SK-N-SH (cell line): ENCODE measurements at regions of chr1 and their contacts with region 1.

Region 1: DNA sequence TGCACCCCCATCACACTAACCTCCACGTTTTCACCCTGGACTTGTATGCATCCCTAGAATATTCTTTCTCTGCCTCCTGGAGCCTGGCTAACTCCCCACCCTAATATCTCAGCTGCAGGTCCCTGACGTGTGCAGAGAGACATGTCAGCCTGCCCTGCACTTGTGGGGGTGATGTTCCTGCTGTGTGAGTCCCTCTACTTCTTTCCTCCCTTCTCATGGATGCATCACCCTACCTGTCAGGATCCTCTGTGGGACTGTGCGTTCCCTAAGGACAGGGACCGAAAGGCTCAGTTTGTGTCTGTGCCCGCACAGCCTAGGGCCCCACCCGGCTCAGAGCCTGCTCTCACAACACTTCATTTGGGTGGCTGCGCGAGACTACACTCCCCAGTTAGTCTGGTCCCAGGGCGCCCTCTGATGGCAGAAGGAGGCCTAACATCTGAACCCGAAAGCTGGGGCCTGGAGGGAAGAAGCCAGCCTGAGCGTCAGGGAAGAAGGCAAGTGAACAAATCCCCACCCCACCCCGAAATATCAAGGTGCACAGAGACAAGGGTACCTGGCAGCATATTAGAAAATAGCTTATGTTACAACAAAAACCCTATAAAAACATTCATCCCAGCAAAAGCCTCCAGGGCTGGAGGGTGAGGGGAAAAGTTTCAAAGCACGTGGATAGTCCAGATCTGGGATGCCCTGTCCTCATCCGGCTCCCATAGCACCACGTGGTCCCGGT is 3.7 kb downstream of the CD52 start:
- DNase-seq: peak; percentile 91
- H3K4me3 ChIP-seq: peak overlapping the region in 1 of 2 experiments; percentile 17; a peak in 1 of 4 replicates
- H3K27ac ChIP-seq: no peak overlapping the region
- H3K4me1 ChIP-seq: peaks cover 0 to 3% of the 10 kb centered on the region in 2 experiments; a peak in 1 of 4 replicates
- H3K27me3 ChIP-seq: no peaks in the 10 kb centered on the region
- CTCF ChIP-seq: peak; percentile 88
- EP300 ChIP-seq: no peak
- RAD21 ChIP-seq: peak; percentile 92

Region 2: GRCh38 chr1:26169669-26170471 is 151.6 kb before region 1 on chr1 and contains the start of gene ZNF593:
- CTCF ChIA-PET with region 1: interaction called, 17 read pairs
- POLR2A ChIA-PET with region 1: no interaction called
- DNase-seq: peak; percentile 99
- H3K4me3 ChIP-seq: peak within 1 kb of the TSS; percentile 85 to 98
- H3K27ac ChIP-seq: peak within 1 kb of the TSS; percentile 48 to 54; a peak in 3 of 4 replicates
- H3K4me1 ChIP-seq: peaks cover 0 to 18% of the 10 kb centered on the region in 2 experiments; a peak in 2 of 4 replicates
- H3K27me3 ChIP-seq: no peaks in the 10 kb centered on the region
- CTCF ChIP-seq: peak; percentile 78
- EP300 ChIP-seq: no peak
- RAD21 ChIP-seq: peak; percentile 47; the same call in 1 of the 2 replicates
- polyA plus RNA-seq, gene ZNF593: 58.7 and 64.8 TPM in 2 replicates

Region 3: DNA sequence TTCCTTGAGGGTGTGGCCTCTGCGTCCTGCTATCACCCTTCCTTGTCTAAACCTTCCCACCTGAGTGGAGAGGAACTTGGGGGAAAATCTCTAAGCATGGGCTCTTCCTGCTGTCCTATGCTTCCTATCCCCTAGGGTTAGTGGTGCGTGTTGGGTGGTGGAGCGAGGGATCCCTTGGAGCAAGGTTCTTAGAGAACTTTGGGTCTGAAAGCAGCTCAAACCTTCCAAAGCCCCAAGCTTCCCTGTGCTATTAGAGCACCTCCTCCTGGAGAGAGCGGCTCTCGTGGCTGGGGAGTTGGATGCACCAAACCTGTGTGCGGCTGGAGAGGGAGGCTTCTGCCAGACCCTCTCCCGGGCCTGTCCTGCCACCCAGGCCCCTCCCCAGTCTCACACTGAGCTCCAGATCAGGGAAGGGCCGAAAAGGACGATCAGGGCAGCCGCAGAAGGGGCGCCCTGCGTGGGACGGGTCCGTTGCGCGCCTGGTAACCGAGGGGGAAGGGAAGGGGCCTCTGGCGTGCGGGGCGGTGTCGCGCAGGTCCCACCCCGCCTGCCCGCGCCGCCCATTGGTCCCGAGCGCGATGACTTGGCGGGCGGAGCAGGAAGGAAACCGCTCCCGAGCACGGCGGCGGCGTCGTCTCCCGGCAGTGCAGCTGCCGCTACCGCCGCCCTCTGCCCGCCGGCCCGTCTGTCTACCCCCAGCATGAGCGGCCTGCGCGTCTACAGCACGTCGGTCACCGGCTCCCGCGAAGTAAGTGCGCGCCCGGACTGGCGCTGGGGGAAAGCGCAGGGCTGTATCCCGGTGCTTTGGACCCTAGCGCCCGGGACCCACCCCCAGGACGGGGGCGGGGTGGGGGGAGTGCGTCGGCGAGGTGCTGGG is 41.8 kb before region 1 on chr1 and contains the start of gene SH3BGRL3:
- CTCF ChIA-PET with region 1: interaction called, 213 read pairs
- POLR2A ChIA-PET with region 1: interaction called, 5 read pairs
- DNase-seq: peak; percentile 96
- H3K4me3 ChIP-seq: peak within 1 kb of the TSS; percentile 85 to 95
- H3K27ac ChIP-seq: peak within 1 kb of the TSS; percentile 76 to 87
- H3K4me1 ChIP-seq: peaks cover 36 to 71% of the 10 kb centered on the region in 2 experiments; a peak in 3 of 4 replicates
- H3K27me3 ChIP-seq: no peaks in the 10 kb centered on the region
- CTCF ChIP-seq: peak; percentile 62
- EP300 ChIP-seq: no peak
- RAD21 ChIP-seq: peak; percentile 19; the same call in 1 of the 2 replicates
- polyA plus RNA-seq, gene SH3BGRL3: 131 and 202 TPM in 2 replicates

Region 4: DNA sequence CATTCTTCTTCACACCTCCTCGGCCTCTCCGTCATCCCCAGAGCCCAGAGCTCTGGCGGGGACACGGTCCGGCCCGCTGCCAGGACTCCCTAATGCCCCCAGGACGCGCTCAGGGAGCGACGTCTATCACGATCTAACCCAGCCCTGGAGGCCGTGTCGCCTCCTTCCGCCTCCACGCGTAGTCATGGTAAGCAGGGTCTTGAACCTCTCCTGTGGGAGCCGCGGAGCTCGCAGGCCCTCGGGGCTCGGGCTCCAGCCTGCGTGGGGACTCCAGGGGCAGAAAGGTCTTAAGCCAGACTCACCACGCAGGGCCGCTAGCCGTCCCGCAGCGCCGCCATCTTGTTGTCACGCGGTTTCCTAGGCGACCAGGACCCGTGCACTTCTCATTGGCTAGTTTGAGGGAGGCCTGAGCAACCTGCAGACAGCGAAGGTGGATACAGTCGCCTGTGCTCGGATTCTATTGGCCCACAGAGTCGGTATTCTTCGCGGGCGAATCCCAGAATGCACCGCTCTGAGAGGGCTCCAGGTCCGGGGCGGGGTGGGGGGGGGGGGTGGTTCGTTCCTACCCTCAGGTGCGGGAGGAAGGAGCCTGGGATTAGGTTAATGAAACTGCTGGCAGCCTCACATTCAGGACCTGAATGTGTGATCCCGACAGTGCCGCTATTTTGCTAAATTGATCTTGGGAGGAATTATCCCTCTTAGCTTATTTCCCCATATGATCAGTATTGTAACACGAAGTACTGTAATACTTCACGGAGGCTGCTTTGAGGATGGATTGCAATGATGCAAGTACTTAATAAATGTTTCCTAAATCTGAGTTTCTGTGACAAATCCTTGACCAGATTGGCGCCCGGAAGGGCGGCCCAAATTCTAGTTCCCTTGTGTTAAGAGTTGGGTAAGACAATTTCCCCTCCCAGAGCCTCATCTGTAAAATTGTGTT is 14.9 kb before region 1 on chr1 and contains the start of gene UBXN11:
- CTCF ChIA-PET with region 1: interaction called, 41 read pairs
- POLR2A ChIA-PET with region 1: no interaction called
- DNase-seq: peak; percentile 96
- H3K4me3 ChIP-seq: peak within 1 kb of the TSS; percentile 81 to 92
- H3K27ac ChIP-seq: peak within 1 kb of the TSS; percentile 27 to 58; a peak in 3 of 4 replicates
- H3K4me1 ChIP-seq: peaks cover 0 to 9% of the 10 kb centered on the region in 2 experiments; a peak in 1 of 4 replicates
- H3K27me3 ChIP-seq: no peaks in the 10 kb centered on the region; the same call in 1 of the 2 replicates
- CTCF ChIP-seq: no peak
- EP300 ChIP-seq: no peak
- RAD21 ChIP-seq: no peak
- polyA plus RNA-seq, gene UBXN11: 30.6 and 35.3 TPM in 2 replicates

Region 5: DNA sequence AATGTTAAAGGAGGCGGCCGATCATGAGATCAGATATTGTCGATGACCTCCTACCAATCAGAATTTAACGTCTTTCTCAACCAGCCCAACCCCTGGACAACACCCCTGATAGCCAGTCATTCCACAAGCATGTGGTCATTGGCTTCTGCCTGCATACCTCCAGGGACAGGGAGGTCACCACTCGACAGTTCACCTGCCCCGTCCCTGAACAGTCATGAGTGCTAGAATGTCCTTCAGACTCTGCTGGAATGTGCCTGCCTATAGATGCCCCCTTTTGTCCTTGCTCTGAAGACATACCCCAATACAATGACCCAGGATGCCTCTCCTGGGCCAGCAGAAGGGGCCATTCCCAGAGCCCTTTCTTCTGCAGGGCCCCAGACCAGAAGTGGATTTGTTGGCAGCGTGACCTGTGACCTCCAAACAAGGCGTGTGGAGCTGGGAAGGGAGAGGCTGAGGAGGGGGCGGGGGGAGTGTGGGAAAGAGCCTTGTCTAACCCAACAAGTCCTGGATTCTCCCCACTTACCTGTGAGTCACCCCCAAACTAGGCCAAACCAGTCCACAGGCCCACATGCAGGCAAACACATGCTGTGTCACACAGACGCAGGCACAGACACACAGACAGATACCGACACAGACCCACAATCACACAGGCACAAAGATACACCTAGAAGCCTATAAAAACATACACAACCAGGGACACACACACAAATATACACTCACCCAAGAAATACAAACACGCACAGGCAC is 30.3 kb after region 1 on chr1:
- CTCF ChIA-PET with region 1: interaction called, 26 read pairs
- POLR2A ChIA-PET with region 1: no interaction called
- DNase-seq: no peak
- H3K4me3 ChIP-seq: no peak overlapping the region
- H3K27ac ChIP-seq: no peak overlapping the region
- H3K4me1 ChIP-seq: no peaks in the 10 kb centered on the region
- H3K27me3 ChIP-seq: no peaks in the 10 kb centered on the region
- CTCF ChIP-seq: no peak
- EP300 ChIP-seq: no peak
- RAD21 ChIP-seq: no peak

Region 6: DNA sequence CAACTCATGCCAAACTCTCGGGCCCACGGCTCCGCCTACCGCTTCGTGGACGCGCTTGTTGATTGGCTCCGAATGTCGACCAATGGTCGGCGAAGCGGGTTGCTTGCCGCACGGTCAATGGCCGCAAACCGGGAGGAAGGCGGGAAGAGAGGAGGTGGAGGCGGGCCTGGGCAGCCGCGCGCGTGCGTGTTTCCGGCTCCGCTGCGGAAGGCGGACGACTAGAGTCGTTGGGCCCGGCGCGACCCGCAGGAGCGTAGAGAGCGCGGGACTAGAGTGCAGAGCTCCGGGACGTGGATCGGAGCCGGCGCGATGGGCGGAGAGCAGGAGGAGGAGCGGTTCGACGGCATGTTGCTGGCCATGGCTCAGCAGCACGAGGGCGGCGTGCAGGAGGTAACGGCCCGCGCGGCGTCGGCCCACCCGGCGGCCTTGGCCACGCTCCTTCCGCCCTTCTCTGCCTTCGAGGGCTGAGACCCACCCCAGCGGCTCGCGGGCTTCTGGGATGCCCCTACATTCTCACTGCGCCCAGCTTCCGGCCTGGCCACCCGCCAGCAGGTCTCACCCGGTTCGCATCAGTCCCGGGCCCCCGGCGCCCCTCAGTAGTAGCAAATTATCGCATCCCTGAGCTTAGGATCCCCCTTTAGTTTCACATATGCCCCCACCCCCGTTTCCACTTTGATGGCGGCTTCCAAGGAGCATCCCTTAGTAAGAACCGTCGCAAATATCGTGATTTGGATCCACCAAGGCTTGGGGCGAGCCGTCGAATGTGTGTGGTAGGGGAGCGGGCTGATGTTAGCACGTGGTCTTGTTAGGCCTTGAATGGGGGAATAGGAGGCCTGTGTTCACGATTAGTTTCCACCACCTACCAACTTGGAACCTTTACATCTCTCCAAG is 600.3 kb after region 1 on chr1 and contains the start of gene NUDC:
- CTCF ChIA-PET with region 1: no interaction called
- POLR2A ChIA-PET with region 1: no interaction called
- DNase-seq: peak; percentile 96
- H3K4me3 ChIP-seq: peak within 1 kb of the TSS; percentile 69 to 80
- H3K27ac ChIP-seq: peak within 1 kb of the TSS; percentile 76 to 78
- H3K4me1 ChIP-seq: peaks cover 13 to 16% of the 10 kb centered on the region in 2 experiments; a peak in 1 of 4 replicates
- H3K27me3 ChIP-seq: no peaks in the 10 kb centered on the region
- CTCF ChIP-seq: no peak
- EP300 ChIP-seq: no peak
- RAD21 ChIP-seq: no peak
- polyA plus RNA-seq, gene NUDC: 96.2 and 153 TPM in 2 replicates